Caco-2 (cell line): ENCODE measurements at regions of chr11 and their contacts with region 1.

Region 1: GRCh38 chr11:6489306-6489705 is 7.8 kb upstream of the DNHD1 start:
- DNase-seq: peak in 1 of 2 experiments; percentile 36
- H3K4me3 ChIP-seq: no peak overlapping the region
- H3K4me3 Mint-ChIP-seq: peak overlapping the region; percentile 35
- H3K27ac Mint-ChIP-seq: peak overlapping the region; percentile 29
- H3K4me1 ChIP-seq: peaks cover 62% of the 10 kb centered on the region
- H3K4me1 Mint-ChIP-seq: peaks cover 6% of the 10 kb centered on the region
- H3K27me3 ChIP-seq: no peaks in the 10 kb centered on the region
- H3K27me3 Mint-ChIP-seq: no peaks in the 10 kb centered on the region
- CTCF ChIP-seq: no peak

Region 2: DNA sequence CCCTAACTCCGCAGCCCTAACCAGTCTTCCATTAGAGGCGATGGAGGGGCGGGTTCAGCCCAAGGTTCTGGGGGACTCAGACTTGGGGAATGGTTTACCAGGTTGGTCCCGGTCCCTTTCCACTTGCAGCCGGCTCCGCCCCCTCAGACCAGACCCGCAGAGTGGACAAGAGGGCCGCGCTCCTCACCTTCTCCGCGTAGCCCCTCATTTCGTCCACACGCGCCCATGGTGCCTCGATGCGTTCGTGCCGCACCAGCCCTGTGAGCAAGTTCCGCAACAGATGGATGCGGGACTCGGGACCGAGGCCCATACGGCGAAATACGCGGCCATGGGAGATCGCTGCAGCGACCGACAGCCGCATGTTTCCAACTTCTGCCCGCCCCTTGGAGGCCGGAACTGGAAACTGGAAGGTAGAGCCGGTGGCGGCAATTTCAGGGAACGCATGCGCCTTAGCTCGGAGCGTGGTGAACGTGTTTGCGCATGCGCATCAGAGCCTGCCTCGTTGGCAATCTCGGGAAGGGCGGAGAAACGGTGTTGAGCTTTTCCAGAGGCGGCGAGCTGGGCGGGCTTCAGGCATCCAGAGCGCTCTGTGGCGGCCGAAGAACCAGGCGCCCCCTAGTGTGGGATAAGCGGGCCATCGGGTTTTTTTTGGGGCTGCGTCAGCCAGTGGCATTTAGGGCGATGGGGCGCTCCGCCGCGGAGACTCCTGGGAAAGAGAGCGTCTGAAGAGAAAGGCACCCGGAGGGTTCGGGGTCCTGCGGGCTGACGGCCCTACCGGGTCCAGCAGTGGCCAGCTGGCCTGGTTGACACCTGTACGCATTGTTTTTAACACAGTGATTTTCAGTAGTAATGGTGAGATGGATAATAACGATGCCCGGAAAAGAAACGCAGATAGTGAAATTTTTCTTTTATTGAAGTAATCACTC is 193.9 kb after region 1 on chr11 and contains the start of gene MRPL17:
- CTCF ChIA-PET with region 1: no interaction called
- POLR2A ChIA-PET with region 1: no interaction called
- intact Hi-C with region 1: loop called (anchors 2 kb)
- DNase-seq: peak; percentile 99
- H3K4me3 ChIP-seq: peak within 1 kb of the TSS; percentile 88
- H3K4me3 Mint-ChIP-seq: peak within 1 kb of the TSS; percentile 100
- H3K27ac Mint-ChIP-seq: peak within 1 kb of the TSS; percentile 100
- H3K4me1 ChIP-seq: peaks cover 13% of the 10 kb centered on the region
- H3K4me1 Mint-ChIP-seq: peaks cover 7% of the 10 kb centered on the region
- H3K27me3 ChIP-seq: no peaks in the 10 kb centered on the region
- H3K27me3 Mint-ChIP-seq: peaks cover 5% of the 10 kb centered on the region
- CTCF ChIP-seq: peak; percentile 89 to 91
- total RNA-seq, gene MRPL17: 57.8 and 60.8 TPM in 2 replicates

Region 3: DNA sequence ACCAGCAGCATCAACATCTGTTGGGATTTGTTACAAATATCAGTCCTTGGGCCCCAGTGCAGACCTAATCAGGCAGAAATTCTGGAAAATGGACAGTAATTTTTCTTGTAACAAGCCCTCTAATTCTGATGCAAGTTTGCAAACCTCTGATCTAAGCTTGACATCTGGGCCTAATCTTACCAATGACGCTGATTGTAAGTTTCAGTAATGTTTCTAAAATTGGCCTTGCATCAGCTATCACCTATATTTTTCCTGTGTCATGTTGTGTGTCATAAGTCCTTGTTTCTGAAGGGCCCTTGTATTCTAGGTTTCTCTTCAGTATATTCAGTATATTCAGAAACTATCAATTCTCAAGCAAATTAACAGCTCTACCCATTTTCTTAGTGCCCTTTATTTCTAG is 473.4 kb after region 1 on chr11:
- CTCF ChIA-PET with region 1: no interaction called
- POLR2A ChIA-PET with region 1: no interaction called
- intact Hi-C with region 1: no loop called
- DNase-seq: no peak
- H3K4me3 ChIP-seq: no peak overlapping the region
- H3K4me3 Mint-ChIP-seq: no peak overlapping the region
- H3K27ac Mint-ChIP-seq: no peak overlapping the region
- H3K4me1 ChIP-seq: no peaks in the 10 kb centered on the region
- H3K4me1 Mint-ChIP-seq: no peaks in the 10 kb centered on the region
- H3K27me3 ChIP-seq: no peaks in the 10 kb centered on the region
- H3K27me3 Mint-ChIP-seq: peaks cover 7% of the 10 kb centered on the region
- CTCF ChIP-seq: no peak

Region 4: DNA sequence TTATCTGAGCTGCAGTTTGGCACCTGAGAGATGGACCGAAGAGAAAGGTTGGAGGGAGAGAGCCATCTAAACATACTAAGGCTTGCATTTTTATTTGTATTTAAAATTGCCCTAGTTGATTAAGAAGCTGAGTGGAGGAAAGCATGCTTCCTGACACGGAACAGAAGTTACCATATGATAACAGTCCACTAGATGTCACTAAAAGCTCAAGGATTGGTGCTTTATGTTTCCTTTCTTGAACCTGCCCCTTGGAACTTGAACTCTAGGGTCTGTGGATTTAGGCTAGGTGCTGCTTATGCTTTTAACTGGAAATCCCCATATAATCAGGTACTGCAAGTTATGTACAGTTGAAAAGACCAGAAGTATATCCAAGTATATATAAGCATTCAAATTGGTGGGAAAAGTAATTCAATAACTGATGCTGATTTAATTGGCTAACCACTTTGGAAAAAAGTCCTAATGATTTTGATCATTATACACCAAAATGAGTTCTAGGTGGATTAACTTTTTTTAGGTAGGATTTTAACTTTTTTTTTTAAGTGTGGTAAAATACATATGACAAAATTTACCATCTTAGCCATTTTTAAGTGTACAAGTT is 609.0 kb after region 1 on chr11:
- CTCF ChIA-PET with region 1: no interaction called
- POLR2A ChIA-PET with region 1: no interaction called
- intact Hi-C with region 1: no loop called
- DNase-seq: peak in 1 of 2 experiments; percentile 54
- H3K4me3 ChIP-seq: no peak overlapping the region
- H3K4me3 Mint-ChIP-seq: no peak overlapping the region
- H3K27ac Mint-ChIP-seq: no peak overlapping the region
- H3K4me1 ChIP-seq: no peaks in the 10 kb centered on the region
- H3K4me1 Mint-ChIP-seq: no peaks in the 10 kb centered on the region
- H3K27me3 ChIP-seq: no peaks in the 10 kb centered on the region
- H3K27me3 Mint-ChIP-seq: peaks cover 3% of the 10 kb centered on the region
- CTCF ChIP-seq: peak; percentile 55 to 62